Calu3 (cell line): ENCODE measurements at regions of chr12 and their contacts with region 1.

Region 1: DNA sequence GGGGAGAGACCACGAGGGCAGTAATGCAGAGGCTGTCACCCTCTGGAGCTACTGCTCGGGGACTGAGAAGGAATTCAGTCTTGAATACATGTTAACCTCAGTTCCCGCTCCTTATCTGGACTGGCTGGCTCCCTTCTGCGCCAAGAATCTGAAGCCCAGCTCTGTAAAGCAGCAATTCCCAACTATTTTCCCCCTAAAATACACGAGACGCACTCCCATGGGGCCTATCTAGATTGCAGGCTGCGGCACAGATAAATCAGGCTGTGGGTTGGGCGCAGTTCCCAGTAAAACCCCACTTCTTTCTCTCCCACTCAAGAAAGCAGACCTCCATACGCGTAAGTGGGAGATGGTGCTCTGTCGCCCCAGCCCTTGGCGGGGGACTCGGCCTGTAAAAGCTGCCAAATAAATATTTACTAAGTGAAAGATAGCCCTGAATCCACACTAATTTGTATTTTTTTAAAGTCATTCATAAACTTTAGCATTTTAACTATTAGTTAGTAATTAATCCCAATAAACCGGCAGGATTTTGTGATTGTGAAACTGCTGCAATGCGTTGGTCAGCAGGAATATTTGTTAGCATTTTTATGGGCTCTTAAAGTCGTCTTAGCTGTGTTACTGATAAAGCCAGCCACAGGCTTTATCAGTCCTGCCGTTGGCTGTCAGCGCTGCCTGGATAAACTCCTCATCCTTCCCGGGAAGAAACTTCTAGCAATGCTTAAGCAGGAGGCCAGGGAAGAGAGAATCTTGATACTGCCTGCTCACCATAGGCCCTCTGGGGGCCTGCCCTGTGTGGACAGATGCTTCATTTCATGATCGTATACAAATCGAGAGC is 17.8 kb downstream of the FBXL14 start:
- DNase-seq: no peak
- H3K4me3 Mint-ChIP-seq: no peak overlapping the region
- H3K27ac Mint-ChIP-seq: no peak overlapping the region
- H3K4me1 Mint-ChIP-seq: peaks cover 23% of the 10 kb centered on the region
- H3K27me3 Mint-ChIP-seq: peaks cover 24% of the 10 kb centered on the region
- CTCF ChIP-seq: no peak

Region 2: DNA sequence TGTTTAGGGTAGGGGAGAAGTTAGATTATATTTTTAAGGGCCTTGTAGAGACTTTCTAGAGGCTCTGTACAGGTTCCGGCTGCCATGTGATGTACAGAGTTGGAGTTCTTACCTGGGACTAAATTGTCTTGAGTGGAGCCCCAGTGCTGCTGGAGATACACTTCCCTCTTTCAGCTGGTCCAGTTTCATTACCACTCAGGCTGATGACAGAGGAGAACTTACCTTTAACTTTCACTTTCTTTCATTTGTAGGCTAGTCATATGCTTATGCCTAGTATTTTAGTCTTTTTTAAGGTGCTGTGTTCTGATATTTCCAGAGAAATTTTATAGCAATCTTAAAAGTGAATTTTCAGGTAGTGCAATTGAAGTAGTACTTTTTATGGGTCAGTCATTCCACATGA is 468.4 kb before region 1 on chr12:
- CTCF ChIA-PET with region 1: no interaction called
- intact Hi-C with region 1: loop called (anchors 2 kb)
- DNase-seq: no peak
- H3K4me3 Mint-ChIP-seq: no peak overlapping the region
- H3K27ac Mint-ChIP-seq: no peak overlapping the region
- H3K4me1 Mint-ChIP-seq: peaks cover 4% of the 10 kb centered on the region
- H3K27me3 Mint-ChIP-seq: no peaks in the 10 kb centered on the region
- CTCF ChIP-seq: no peak

Region 3: DNA sequence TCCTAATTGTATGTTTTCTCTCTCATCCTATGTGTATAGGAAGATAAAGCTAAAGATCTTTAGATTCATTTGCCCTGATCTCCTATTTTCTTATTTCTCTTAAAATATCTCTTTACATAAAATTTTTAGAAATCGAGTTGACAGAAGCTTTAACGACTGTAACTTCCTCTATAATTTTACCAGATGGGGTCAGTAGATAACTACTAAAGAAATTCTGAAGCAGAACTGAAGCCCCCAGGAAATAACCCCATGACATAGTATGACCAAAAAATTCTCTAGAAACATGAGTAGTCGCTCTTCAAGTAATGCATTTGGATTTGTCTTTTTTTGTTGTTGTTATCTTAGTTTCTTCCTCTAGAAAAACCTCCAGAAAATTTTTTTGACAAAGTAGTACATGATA is 297.6 kb before region 1 on chr12:
- CTCF ChIA-PET with region 1: no interaction called
- intact Hi-C with region 1: loop called (anchors 5 kb)
- DNase-seq: no peak
- H3K4me3 Mint-ChIP-seq: no peak overlapping the region
- H3K27ac Mint-ChIP-seq: no peak overlapping the region
- H3K4me1 Mint-ChIP-seq: no peaks in the 10 kb centered on the region
- H3K27me3 Mint-ChIP-seq: no peaks in the 10 kb centered on the region
- CTCF ChIP-seq: no peak